Cardiac septum (tissue), 1 donor: ENCODE measurements at regions of chr14 and their contacts with region 1.

Region 1: DNA sequence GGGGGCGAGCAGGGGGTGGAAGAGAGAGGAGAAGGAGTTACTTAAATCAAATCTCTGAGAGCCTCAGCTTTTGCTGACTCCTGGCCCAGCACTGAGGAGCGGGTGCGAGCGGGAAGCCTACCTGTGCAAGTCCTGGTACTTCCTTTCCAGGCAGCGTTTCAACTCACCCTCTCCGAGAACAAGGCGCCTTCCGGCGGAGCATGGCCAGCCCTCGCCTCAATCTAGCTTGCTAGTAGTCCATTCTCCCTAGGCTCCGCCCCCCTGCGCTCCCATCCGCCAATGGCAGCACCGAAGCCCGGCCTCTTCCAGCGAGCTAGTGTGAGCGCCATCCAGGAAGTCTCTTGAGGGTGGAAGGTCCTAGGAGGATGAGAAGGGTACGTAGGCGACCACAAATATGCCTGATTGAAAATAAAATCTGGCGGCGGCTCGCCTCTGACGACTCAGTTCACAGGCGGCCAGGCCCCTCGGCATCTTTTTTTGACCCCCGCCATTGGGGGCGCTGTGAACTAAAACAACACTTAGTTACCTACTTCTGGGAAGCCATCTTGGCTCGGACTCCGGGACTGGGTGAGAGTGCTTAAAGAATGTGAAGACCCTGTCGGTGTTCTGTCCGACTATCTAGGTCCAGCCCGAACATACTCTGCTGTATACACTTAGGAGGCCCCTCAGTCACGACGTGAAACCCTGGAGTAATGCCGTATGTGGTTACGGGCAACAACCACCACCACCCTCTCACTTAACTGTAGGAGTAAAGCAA is at the start of gene CHD8:
- DNase-seq: peak; percentile 100
- total RNA-seq, gene CHD8: 38.3 TPM

Region 2: GRCh38 chr14:21383848-21384493 is 72.1 kb before region 1 on chr14 and contains the start of gene SUPT16H:
- intact Hi-C with region 1: loop called (anchors 2 kb)
- DNase-seq: peak; percentile 98
- total RNA-seq, gene SUPT16H: 31.7 TPM

Region 3: DNA sequence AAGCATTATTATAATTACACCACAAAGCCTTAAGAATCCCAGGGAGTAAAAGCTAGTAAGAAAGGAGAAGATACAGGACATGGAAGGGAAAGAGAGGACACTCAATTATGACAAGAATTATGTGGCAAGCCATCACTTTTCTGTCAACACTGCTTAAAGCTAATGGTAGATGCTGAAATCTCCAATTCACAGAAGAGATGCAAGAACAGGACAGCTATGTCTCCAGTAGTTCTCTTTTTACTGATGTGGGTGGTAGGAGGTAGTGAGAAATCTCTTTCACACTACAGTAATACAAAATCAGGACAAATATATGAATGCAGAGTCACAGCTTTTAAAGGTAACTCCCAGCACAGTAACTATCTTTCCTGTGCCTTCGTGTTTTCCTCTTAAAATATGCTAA is 29.4 kb before region 1 on chr14:
- intact Hi-C with region 1: no loop called
- DNase-seq: no peak

Region 4: DNA sequence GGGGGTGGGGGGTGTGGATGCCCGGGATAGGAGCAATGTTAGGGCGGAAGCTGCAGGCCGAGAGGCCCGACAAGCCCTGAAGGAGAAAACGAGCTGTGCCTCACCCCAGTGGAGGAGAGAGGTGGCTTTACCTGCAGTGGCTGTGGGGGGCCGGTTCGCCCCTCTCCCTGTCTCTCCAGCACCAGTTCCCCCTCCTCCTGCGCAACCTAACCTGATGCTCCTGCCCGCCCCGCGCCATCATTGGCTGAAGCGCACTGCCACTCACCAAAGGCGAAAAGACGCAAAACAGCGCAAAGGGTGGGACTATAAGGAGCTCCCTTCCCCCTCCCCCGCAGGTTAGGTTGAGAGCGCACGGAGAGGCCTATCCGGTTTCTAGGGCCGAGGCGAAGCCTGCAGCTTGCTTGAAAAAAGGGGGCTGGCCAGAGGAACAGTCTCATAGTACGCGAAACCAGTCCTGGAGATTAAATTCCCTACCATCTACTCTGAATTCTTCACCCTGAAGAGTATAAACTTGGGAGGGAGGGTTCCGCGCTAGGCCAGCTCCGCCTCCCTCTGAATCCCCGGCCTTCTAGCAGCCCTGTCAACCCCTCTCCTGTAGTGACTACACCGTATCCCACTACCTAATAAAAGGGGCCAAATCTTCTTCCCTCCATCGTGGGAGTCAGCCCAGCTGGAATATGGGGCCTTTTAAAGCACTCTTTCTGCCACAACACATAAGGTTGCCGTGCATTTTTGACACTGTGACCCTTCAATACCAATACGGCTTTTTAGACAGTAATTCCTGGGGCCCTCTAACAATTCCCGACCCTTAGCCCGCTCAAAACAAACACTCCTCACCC is 18.8 kb before region 1 on chr14:
- intact Hi-C with region 1: loop called (anchors 1 kb)
- DNase-seq: peak; percentile 100

Region 5: GRCh38 chr14:21476925-21477681 is 21.0 kb after region 1 on chr14 and contains the starts of genes RAB2B and TOX4:
- intact Hi-C with region 1: loop called (anchors 1 kb)
- DNase-seq: peak; percentile 98
- total RNA-seq, gene RAB2B: 22.6 TPM
- total RNA-seq, gene TOX4: 75.2 TPM

Region 6: GRCh38 chr14:21557084-21557901 is 101.2 kb after region 1 on chr14:
- intact Hi-C with region 1: loop called (anchors 2 kb)
- DNase-seq: no peak

Region 7: DNA sequence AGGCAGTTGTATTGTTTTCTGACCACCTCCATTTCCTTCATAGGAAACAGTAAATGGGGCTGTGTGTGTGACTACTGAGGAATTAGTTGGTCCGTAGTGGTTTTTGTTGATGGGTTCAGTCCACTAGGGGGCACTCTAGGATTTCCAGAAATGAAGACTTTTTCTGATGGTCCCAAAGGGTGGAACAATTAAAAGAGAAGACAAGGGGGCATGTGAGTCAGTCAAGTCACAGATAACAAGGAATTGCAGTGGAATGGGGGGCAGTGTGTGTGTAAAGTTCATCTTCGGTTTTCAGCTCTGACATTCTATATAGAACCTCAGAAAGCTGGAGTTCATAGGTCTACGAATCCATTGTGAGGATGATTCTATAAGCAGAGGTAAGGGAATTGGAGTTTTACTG is 404.1 kb after region 1 on chr14:
- intact Hi-C with region 1: no loop called
- DNase-seq: no peak